Cardiac septum (tissue), 1 donor: ENCODE measurements at regions of chr7 and their contacts with region 1.

Region 1: DNA sequence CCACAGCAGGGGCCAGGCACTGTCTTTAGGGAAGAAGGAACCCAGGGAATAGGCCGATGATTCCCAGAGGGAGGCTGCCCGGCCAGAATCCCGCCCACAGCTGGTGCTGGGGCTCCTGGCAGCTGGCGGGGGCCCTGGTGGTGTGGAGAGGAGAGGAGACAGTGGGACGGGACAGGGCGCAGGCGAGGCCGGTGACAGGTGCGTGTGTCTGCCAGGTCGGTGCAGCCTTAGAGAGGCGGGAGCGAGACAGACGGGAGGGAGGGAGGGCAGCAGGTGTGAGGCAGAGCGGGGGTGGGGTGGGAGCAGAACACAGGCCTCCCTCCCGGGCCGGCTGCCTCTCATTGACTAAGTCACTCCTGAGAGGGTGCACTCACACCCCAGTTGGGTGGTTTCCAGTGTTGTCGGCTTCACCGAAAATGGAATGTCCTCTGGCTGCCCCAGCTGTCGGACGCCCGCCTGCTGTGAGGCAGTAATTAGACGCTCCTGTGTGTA is 55.2 kb downstream of the ELFN1 start:
- DNase-seq: peak; percentile 90

Region 2: DNA sequence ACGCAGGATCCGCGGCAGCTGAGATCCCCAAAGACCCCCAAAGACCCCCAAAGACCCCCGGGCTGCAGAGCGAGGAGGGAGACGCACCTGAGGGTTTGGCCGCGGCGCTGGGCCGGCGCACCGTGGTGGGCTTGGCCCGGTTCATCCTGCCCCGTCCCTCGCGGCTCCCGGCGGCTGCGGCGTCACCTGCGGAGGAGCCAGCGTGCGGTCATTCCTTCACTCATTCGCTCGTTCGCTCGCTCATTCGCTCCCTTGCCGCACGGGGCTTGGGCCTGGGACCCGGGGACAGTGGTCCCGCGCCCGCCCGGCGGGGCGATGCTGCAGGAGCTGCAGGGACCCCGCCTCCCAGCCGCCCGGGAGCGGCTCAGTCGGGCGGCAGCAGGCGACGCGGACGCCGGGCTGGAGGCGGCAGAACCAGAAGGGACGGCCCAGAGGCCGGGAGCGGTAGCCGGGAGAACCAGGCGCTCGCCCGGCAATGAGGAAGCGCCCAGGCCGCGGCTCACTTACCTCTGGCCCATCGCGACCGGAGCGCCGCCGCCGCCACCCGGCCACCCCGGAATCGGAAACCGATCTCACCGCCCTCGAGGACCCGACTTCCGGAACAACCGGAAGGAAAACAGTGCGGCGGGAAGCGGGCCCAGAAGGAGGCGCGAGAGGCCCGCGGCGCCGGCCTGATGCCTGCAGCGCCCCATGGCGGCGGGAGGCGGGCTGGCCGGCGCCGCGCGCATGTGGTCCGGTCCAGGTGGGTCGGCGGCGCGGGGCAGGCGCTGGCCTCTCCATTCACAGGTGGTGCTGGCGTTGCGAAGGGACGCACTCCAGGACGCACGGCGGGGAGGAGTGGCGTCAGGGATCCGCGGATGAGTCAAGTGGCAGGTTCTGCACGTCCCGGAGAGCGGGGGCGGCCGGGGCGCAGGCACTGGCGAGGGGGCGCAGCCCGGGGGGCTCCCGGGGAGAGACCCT is 221.1 kb before region 1 on chr7 and contains the start of gene INTS1:
- intact Hi-C with region 1: no loop called
- DNase-seq: peak; percentile 97
- total RNA-seq, gene INTS1: 54.7 TPM

Region 3: DNA sequence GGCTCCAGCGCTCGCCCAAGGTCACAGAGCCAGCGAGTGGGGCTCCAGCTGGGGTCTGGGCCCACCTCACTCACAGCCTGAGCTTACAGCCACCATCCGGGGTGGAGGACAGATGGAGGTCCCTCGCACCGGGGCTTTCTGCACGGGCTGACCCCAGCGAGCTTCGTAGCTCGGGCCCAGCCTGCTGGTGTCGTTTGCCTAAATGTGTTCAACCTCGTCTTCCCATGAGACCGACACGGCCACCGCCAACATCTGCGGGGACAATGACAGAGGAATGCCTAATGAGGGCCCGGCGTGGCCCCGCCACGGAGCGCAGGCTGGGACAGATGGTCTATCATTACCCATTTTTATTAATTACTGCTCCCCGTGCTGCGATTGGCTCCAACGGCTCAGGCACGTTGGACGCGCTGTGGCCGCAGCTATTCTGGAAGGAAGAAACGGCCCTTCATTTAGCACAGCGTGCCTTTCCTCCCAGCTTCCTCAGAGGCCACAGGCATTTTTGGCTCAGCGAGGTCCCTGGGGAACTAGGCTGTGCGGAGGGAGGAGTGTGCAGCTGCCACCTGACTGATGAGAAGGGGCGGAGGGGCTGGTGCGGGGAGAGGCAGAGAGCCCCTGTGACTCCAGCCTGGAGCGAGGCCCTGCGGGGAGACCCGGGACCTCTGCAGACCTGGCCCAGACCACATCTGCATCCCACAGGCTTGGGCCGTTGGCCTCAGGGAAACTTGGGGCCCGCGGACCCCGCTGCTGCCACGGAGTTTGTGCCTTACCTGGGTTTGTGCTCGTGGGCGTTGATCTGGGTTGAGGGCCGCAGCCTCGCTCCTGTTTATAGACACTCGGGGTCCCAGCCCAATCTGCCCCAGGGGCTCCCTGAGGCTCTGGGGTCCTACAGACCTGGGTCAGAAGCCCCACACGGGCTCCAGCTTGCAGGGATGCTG is 78.0 kb before region 1 on chr7:
- intact Hi-C with region 1: loop called (anchors 5 kb)
- DNase-seq: no peak

Region 4: DNA sequence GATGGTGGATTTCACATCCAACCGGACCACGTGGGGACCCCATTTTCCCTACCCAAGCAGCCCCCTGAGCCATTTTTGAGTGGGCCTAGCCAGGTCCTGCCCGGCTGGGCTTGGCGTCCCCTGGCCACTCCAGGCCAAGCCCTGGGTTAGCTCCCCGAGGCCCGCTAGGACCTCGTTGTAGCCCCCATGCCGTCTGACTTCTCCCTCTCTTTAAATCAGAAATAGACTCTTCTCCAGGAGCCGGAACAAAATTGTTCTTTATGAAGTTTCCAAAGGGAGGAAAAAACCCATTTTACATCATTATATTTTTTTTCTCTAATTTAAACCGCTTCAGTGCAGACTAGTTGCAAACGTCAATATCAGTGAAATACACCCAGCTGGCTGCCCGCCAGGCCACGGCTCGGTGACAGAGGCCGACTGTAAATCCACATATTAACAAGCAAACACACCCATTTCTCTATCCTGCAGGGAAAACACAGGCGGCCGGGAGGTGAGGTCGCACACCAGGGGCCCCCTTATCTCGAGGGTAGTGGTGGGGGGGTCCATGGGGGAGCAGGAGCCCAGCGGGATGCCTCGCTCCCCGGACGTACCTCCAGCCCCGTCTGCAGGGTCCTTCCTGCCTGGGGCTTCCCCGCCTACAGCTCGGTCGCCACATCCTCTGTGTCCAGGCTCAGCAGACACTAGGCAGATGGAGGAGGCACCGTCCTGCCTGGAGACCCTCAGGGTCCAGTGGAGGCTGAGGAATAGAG is 17.5 kb after region 1 on chr7:
- intact Hi-C with region 1: no loop called
- DNase-seq: no peak

Region 5: DNA sequence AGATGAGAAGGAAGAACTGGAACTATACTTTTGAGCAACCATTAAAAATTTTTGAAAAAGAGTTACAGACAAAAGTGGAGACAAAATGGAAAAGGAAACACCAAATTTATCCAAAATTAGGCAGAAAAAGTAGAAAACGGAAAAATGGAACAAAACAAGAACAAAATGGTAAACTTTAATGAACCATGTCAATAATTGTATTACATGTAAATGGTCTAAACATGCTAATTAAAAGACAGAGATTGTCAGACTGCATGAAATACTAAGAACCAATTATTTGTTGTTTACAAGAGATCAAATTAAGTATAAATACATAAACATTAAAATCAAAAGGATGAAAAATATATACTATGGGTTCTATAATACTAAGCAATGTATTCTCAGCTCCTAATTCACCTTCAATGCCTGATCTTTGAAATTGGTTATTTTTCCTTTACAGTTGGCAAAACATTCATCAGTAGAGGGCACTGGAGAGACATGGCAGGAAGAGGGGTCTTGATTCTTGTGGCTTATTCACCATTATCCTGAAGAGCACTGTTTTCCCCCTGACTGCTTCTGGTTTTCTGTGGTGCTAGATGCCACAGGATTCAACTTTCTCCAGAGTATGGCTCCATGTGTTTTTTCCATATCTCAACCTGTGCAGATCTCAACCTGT is 69.8 kb after region 1 on chr7:
- intact Hi-C with region 1: no loop called
- DNase-seq: no peak